ENCODE measurements at regions of chr17 and their contacts with region 1.

Region 1: DNA sequence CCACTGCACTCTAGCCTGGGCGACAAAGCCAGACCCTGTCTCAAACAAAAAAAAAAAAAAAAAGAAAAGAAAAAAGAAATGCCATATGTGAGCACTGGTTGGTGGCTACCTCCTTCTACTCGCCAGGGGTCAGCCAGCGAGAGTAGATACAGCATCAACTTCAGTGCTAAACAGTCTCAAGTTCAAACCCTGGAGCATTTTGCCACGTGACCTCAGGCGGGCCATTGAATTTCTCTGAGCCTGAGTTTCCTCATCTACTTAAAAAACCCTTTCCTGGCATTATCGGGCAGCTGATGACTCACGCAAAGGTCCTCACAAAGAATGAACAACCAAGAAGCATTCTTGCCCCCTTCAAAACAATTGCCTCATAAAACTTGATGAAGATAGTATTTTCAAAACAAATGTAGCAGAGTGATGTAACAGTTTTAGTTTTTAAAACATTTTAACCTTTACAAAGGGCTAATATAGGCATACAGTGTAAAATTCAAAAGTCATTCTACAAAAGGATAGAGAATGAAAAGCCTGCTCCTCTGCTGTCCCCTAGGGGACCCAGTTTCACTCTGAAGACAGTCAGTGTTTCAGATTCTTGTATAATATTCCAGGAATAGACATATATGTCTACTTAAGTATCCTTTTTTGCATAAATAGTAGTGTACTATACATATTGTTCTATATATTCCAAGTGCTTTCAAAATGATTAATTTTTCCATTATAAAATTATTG is 28.4 kb downstream of the DNAH2 start:
- DNase-seq: peak; percentile 41
- H3K4me3 ChIP-seq: no peak overlapping the region
- H3K27ac ChIP-seq: no peak overlapping the region
- H3K27me3 ChIP-seq: no peaks in the 10 kb centered on the region
- CTCF ChIP-seq: peak; percentile 14; the same call in 1 of the 2 replicates

Region 2: DNA sequence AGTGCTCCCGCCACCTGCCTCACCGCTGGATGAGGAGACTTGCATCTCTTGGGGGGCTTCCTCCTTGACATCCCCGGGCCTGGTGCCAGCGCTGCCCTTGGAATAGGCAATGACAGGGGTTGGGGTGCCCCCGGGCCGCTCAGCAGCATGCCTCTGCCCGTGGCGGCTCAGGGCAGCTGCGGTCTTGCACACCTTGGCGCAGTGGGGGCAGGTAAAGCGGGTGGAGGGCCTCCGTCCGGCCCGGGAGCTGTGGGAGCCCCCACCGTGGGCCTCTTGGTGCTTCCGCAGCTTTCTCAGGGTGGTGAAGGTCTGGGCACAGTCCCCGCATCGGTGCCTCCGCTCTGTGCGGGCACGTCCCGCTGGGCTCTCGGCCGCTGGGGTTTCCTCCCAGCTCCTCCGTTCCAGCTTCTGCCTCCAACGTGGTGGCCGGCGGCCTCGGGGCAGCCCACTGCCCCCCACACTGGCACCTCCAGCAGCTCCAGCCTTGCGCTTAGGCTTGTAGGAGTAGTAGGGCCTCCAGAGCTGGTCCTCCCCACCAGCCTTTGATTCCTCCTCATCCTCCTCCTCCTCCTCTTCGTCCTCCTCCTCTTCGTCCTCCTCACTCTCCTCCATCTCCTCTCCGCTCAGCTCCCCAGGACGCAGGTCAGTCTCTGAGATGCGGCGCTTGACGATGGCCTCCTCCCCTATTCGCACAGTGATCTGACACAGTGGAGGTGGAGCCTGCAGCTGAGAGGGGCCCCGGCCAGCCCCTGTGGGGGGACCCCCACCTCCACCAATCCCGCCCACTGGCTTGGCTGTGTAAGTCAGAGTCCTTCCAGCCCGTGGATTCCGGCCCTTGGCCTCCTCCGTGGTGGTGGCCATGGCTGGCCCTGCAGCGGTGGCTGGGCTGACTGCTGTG is 283.2 kb before region 1 on chr17:
- CTCF ChIA-PET with region 1: no interaction called
- POLR2A ChIA-PET with region 1: no interaction called
- DNase-seq: no peak
- H3K4me3 ChIP-seq: no peak overlapping the region
- H3K27ac ChIP-seq: no peak overlapping the region
- H3K27me3 ChIP-seq: no peaks in the 10 kb centered on the region
- CTCF ChIP-seq: no peak

Region 3: DNA sequence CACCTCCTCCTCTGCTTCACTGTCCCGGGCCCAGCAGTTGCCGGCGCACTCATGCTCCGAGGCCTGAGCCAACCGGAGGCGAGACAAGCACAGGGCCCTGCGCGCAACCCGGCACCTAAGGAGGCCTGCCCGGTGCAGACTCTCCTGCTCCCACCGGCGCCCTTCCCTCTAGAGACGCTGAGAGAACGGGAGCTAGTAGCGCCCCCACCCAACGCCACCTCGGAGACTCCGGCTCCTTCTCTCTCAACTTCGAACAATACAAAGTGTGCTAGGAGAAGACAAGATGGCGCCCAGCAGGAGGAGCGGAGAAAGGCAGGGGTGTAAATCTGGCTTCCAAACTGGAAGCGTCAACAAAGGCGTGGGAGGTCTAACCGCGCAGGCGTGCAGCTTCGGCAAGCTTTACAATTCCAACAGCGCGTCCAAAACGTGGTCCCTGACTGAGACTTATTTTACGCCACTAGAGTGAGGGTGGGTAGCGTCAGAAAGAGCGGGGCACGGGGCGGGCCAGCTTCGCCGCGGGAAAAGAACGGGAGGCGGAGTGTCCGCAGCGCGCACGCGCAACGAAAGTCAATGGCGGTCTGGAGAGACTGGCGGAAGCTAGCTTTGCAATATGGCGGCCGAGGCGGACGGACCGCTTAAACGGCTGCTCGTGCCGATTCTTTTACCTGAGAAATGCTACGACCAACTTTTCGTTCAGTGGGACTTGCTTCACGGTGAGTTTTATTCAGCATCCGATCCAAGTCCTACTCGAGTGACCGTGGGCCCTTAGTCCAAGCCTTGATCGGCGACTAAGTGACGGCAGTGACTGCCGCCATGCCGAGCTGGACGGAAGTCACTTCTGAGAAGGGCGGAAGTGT is 162.4 kb before region 1 on chr17 and contains the start of gene MPDU1:
- CTCF ChIA-PET with region 1: no interaction called
- POLR2A ChIA-PET with region 1: no interaction called
- DNase-seq: peak; percentile 92
- H3K4me3 ChIP-seq: peak within 1 kb of the TSS; percentile 92
- H3K27ac ChIP-seq: peak within 1 kb of the TSS; percentile 97
- H3K27me3 ChIP-seq: no peaks in the 10 kb centered on the region
- CTCF ChIP-seq: no peak; the same call in 1 of the 2 replicates
- polyA plus RNA-seq, gene MPDU1: 128 and 131 TPM in 2 replicates

Region 4: DNA sequence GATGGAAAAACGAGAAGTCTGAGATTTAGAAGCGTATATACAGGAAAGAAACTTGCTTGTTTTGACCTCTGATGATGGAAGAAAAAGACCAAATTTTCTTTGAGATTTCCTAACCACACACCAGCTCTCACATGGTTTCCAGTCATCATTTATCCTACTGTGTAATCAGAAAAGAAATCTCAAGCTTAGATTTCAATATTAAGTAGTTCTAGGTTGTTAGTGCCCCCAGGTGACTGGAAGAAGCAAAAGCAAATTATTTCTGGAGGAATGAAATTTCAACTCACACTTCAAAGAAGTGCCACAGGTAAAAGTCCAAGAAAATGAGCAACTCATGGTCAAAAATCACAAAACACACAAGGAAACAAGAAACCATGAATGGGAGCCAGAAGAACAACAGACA is 36.3 kb after region 1 on chr17:
- CTCF ChIA-PET with region 1: interaction called, 118 read pairs
- POLR2A ChIA-PET with region 1: interaction called, 4 read pairs
- DNase-seq: peak; percentile 11
- H3K4me3 ChIP-seq: no peak overlapping the region
- H3K27ac ChIP-seq: no peak overlapping the region
- H3K27me3 ChIP-seq: peaks cover 30% of the 10 kb centered on the region
- CTCF ChIP-seq: peak; percentile 56

Region 5: DNA sequence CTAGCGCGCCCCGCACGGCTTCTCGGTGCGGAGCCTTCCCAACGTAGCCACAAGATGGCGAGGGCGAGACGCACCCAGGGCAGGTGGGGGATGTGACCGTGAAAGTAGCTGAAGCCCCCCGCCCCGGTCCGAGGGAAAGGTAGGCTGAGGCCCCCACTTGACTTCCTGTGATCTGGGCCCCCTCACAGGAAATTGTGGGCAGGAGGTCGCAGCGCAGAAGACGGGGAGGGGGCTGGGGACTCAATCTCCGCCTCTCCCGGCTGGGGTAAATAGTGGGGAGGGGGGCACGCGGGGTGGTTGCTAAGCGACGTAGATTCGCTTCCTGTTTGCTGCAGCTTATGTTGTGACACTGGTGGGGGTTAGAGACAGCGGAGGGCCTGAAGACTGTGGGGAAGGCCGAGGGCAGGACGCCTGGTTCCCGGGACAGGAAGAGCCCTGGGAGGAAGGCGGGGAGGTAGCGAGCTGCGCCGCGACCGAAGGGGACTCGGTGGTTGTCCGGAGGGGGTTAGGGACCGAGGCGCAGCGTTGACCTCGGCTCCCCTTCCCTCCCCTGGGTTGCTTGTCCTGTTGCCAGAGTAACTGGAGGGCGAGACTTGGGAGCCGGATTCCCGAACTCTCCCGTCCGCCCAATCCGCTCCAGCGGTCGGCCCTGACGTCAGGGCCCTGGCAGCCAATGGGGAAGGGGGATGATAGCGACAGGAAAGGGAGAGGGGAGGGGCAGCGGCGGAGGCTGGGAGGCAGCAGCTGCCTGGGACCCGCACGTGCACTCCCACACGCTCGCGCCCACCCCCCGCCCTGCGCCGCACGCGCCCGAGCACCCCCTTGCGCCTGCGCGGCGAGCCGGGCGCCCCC is 89.3 kb after region 1 on chr17:
- CTCF ChIA-PET with region 1: interaction called, 11 read pairs
- POLR2A ChIA-PET with region 1: interaction called, 3 read pairs
- DNase-seq: peak; percentile 97
- H3K4me3 ChIP-seq: peak overlapping the region; percentile 84
- H3K27ac ChIP-seq: peak overlapping the region; percentile 98
- H3K27me3 ChIP-seq: peaks cover 12% of the 10 kb centered on the region
- CTCF ChIP-seq: peak; percentile 82

Region 6: GRCh38 chr17:7922845-7923628 is 177.1 kb after region 1 on chr17:
- CTCF ChIA-PET with region 1: no interaction called
- POLR2A ChIA-PET with region 1: interaction called, 10 read pairs
- DNase-seq: peak; percentile 37
- H3K4me3 ChIP-seq: peak overlapping the region; percentile 58
- H3K27ac ChIP-seq: no peak overlapping the region
- H3K27me3 ChIP-seq: no peaks in the 10 kb centered on the region
- CTCF ChIP-seq: peak; percentile 21; the same call in 1 of the 2 replicates